Activated T-helper 1 cell treated with anti-CD3 and anti-CD28 coated beads, Interleukin-12 subunit alpha, Interleukin-12 subunit beta, Interleukin-2, Interleukin-4 antibody, amounts not matched to agents 30 ng/mL and 10 ng/mL and 1 ng/mL, durations not matched to agents 14 hours and 24 hours and 36 hours (primary cell): ENCODE measurements at regions of chr4 and their contacts with region 1.

Region 1: DNA sequence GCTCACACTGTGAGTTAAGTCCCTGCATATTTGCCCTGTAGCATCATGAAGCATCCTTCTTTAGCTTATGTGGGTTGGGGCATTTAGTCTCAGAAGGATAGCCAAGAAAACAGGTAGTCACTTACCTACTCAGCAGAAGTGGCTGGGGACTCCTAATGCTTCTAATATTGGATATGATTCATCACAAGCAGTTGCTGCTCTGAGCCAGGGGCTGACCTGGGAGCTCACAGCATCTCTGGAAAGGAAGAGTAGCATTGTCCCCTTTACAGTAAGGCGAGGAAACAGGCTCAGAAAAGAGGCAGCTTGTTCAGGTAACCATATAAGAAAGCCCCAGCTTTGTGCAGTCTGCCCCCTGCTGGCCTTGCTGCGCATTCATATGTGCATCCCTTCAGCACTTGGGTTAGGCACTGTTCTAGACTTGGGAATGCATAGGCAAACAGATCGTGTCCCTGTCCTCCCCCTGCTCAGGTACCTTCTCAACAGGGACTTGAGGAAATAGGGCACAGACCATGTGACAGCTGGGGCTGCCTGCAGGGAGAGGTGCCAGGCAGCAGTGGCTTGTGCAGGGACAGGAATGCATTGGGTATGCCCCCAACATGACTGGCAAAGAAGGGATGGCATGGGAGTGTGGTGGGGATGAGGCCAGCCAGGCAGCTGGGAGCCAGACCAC is 35.7 kb upstream of the TBC1D14 start:
- DNase-seq: peak; percentile 64
- H3K4me3 Mint-ChIP-seq: no peak overlapping the region
- H3K27ac Mint-ChIP-seq: no peak overlapping the region
- H3K4me1 Mint-ChIP-seq: peaks cover 16% of the 10 kb centered on the region
- H3K27me3 Mint-ChIP-seq: no peaks in the 10 kb centered on the region

Region 2: DNA sequence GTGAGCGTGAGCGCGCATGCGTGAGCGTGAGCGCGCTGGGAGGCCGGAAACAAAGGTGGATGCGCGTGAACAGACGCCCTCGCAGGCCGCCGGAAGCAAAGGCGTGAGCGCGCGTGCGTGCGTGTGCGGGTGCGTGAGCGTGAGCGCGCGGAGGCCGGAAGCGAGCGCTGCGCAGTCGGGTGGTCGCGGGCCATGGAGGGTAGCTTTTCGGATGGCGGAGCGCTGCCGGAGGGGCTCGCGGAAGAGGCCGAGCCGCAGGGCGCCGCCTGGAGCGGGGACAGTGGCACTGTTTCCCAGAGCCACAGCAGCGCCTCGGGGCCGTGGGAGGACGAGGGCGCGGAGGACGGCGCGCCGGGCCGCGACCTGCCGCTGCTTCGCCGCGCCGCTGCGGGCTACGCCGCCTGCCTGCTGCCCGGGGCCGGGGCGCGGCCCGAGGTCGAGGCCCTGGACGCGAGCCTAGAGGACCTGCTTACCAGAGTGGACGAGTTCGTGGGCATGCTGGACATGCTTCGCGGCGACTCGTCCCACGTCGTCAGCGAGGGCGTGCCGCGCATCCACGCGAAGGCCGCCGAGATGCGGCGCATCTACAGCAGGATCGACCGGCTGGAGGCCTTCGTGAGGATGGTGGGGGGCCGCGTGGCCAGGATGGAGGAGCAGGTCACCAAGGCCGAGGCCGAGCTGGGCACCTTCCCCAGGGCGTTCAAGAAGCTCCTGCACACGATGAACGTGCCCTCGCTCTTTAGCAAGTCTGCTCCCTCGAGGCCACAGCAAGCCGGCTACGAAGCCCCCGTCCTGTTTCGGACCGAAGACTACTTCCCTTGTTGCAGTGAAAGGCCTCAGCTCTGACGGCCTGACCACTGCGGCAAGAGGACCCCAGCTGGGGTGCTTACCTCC is 157.7 kb before region 1 on chr4 and contains the start of gene BLOC1S4:
- intact Hi-C with region 1: loop called (anchors 1 kb)
- DNase-seq: peak; percentile 87
- H3K4me3 Mint-ChIP-seq: peak within 1 kb of the TSS; percentile 93
- H3K27ac Mint-ChIP-seq: peak within 1 kb of the TSS; percentile 88
- H3K4me1 Mint-ChIP-seq: peaks cover 27% of the 10 kb centered on the region
- H3K27me3 Mint-ChIP-seq: peaks cover 8% of the 10 kb centered on the region
- total RNA-seq, gene BLOC1S4: 21.5 and 23.6 TPM in 2 replicates